ENCODE measurements at regions of chr22 and their contacts with region 1.

Region 1: DNA sequence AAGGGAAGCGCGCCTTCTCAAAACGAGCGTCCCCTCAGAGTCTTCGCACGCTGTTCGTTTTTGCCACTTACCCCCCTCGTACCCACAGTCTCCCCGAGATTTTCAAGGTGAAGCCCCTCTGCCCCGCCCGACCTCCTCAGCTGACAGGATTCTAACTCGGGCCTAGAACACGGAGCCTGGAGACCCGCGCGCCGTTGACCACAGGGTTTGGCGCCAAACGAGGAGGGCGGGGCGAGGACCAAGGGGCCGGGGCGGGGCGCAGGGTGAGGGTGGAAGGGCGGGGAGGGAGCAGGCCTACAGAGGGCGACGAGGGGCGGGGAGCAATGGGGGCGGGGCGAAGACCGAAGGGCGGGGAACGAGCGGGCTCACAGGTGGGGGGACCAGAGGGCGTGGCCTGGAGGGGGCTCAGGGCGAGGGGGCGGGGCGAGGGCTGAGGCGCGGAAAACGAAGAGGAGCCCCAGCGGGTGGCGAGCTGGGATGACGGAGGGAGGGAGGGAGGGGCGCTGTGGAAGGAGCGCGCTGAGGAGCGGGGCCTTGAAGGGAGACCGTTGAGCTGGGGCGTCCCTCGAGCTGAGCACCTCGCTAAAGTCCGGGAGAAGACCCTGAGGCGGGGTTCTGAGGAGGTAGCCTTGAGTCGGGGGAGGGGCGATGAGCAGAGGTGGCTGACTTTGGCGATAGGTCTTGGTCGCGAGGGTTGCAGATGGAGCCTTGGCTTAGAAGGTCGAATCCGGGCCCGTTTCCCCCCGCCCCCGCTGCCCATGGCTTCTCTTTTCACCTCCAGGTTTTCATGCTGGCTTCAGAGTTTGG is at the start of gene DMC1:
- DNase-seq: peak; percentile 93 to 94
- H3K4me3 ChIP-seq: peak within 1 kb of the TSS in 2 of 3 donors; percentile 57 to 60
- H3K27ac ChIP-seq: peak within 1 kb of the TSS in 2 of 3 donors; percentile 57 to 62
- H3K4me1 ChIP-seq: peaks cover 0 to 4% of the 10 kb centered on the region in 2 donors
- H3K27me3 ChIP-seq: no peaks in the 10 kb centered on the region
- CTCF ChIP-seq: no peak
- POLR2A ChIP-seq: peak in 1 of 2 donors; percentile 28
- total RNA-seq, gene DMC1: 0.78 to 25.9 (median 1.1) TPM in 3 of 4 donors, not detected in the other

Region 2: GRCh38 chr22:38056969-38057891 is 512.9 kb before region 1 on chr22 and contains the start of gene PICK1:
- intact Hi-C with region 1: loop called (anchors 5 kb)
- DNase-seq: peak; percentile 95
- H3K4me3 ChIP-seq: peak within 1 kb of the TSS; percentile 35 to 58 (median 49)
- H3K27ac ChIP-seq: peak within 1 kb of the TSS; percentile 49 to 83 (median 55)
- H3K4me1 ChIP-seq: peaks cover 7% of the 10 kb centered on the region in 2 donors
- H3K27me3 ChIP-seq: no peaks in the 10 kb centered on the region
- CTCF ChIP-seq: peak in 3 of 6 experiments; percentile 14 to 27 (median 18)
- POLR2A ChIP-seq: peak; percentile 55 to 58
- total RNA-seq, gene PICK1: 52.2 to 81.4 (median 57.5) TPM

Region 3: DNA sequence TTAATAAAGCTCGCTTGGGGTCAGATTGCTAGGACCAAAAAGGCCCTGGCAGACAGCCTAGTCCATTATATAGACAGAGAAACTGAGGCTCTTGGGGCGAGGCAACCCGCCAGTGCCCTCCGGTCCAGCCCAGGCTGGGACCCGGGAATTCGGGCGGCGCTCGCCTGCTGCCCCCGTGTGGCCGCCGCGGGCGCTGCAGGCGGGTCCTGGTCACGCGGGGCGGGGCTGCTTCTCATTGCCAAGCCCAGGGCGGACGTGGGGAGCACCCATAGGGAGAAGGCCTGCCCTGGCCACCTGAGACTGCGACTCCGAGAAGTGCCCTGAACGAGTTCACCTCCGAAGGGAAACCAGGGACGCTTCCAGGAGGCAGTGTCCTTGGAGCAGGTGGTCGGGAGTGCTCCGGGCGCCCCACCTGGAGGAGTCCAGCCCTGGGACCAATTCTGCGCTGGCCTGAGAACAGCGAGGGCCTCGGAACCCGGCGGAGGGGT is 217.0 kb before region 1 on chr22:
- intact Hi-C with region 1: loop called (anchors 5 kb)
- DNase-seq: peak; percentile 68 to 70
- H3K4me3 ChIP-seq: no peak overlapping the region
- H3K27ac ChIP-seq: peak overlapping the region in 1 of 3 donors; percentile 1
- H3K4me1 ChIP-seq: peaks cover 5 to 7% of the 10 kb centered on the region in 2 donors
- H3K27me3 ChIP-seq: no peaks in the 10 kb centered on the region
- CTCF ChIP-seq: peak; percentile 72 to 99 (median 96)
- POLR2A ChIP-seq: no peak

Region 4: DNA sequence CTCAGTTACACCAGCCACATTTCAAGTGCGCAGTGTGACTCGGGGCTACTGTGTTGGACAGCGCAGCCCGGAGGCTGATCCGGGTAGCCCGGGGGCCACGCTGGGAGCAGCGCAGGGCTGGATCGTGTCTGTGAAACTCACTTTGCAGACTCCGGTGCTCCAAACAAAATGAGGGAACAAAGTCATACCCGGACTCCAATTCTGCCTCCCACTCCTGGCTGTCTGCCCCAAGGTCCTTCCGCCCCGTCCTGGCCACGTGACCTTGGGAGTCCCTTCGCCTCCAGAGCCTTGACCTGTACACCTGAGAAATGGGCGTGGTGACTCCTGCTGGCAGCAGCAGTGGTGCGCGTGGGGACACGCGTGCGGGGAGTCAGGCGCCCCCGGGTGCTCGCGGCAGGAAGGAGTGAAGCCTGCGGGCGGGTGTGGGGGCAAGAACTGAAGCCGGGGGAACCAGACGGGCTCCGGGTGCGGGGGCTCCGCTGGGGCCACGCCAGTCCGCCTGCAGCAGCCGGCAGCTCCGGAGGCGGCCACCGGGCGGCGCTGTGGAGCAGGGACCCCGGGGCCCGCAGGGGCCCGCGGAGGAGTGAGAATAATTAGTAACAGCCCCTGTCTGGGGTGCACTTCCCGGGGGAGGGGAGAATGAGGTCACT is 157.6 kb before region 1 on chr22:
- intact Hi-C with region 1: loop called (anchors 10 kb)
- DNase-seq: no peak
- H3K4me3 ChIP-seq: no peak overlapping the region
- H3K27ac ChIP-seq: no peak overlapping the region
- H3K4me1 ChIP-seq: peaks cover 7 to 16% of the 10 kb centered on the region in 2 donors
- H3K27me3 ChIP-seq: no peaks in the 10 kb centered on the region
- CTCF ChIP-seq: peak; percentile 22 to 69 (median 50)
- POLR2A ChIP-seq: no peak

Region 5: GRCh38 chr22:38513063-38513462 is 57.1 kb before region 1 on chr22:
- intact Hi-C with region 1: loop called (anchors 5 kb)
- DNase-seq: no peak
- H3K4me3 ChIP-seq: no peak overlapping the region
- H3K27ac ChIP-seq: no peak overlapping the region
- H3K4me1 ChIP-seq: peaks cover 4 to 14% of the 10 kb centered on the region in 2 donors
- H3K27me3 ChIP-seq: no peaks in the 10 kb centered on the region
- CTCF ChIP-seq: peak in 1 of 6 experiments; percentile 4
- POLR2A ChIP-seq: no peak

Measured in thyroid gland (tissue), 4 donors.